ENCODE measurements at regions of chr7 and their contacts with region 1.

Region 1: GRCh38 chr7:71313553-71313952 is 181.6 kb downstream of the GALNT17 start:
- DNase-seq: no peak
- ATAC-seq: no peak
- H3K4me3 ChIP-seq: no peak overlapping the region
- H3K27ac ChIP-seq: no peak overlapping the region
- H3K4me1 ChIP-seq: peaks cover 2 to 4% of the 10 kb centered on the region in 2 donors
- H3K27me3 ChIP-seq: no peaks in the 10 kb centered on the region

Region 2: GRCh38 chr7:71243736-71244410 is 69.7 kb before region 1 on chr7:
- intact Hi-C with region 1: loop called in 1 of 2 experiments (anchors 2 kb)
- DNase-seq: no peak
- ATAC-seq: peak; percentile 39
- H3K4me3 ChIP-seq: no peak overlapping the region
- H3K27ac ChIP-seq: no peak overlapping the region
- H3K4me1 ChIP-seq: peaks cover 5 to 8% of the 10 kb centered on the region in 2 donors
- H3K27me3 ChIP-seq: no peaks in the 10 kb centered on the region

Region 3: DNA sequence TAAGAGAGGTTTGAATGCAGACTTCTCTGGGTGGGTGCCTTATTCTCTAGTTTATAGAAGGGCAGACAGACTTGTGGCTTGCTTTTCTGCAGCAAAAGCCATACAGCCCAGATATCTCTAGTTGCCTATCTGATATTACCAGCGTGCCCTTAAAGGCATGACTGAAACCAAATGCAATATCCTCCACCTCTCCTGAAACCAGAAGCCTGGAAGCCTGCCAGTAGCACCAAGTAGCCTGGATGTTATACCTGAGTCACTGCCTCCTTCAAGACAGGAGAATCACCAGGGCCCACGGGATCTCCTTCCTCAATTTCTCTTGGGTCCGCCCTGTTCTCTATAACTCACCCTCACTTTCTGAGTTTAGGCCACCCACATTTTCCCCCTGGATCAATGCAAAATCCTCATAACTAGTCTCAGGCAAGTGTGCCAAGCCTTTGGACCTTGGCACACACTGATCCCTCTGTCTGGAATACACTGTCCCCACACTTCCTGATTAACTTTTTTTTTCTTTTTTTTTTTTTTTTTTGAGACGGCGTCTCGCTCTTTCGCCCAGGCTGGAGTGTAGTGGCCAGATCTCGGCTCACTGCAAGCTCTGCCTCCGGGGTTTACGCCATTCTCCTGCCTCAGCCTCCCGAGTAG is 456.8 kb after region 1 on chr7:
- intact Hi-C with region 1: no loop called
- DNase-seq: no peak
- ATAC-seq: no peak
- H3K4me3 ChIP-seq: no peak overlapping the region
- H3K27ac ChIP-seq: no peak overlapping the region
- H3K4me1 ChIP-seq: no peaks in the 10 kb centered on the region
- H3K27me3 ChIP-seq: no peaks in the 10 kb centered on the region